ENCODE measurements at regions of chr16 and their contacts with region 1.

Region 1: DNA sequence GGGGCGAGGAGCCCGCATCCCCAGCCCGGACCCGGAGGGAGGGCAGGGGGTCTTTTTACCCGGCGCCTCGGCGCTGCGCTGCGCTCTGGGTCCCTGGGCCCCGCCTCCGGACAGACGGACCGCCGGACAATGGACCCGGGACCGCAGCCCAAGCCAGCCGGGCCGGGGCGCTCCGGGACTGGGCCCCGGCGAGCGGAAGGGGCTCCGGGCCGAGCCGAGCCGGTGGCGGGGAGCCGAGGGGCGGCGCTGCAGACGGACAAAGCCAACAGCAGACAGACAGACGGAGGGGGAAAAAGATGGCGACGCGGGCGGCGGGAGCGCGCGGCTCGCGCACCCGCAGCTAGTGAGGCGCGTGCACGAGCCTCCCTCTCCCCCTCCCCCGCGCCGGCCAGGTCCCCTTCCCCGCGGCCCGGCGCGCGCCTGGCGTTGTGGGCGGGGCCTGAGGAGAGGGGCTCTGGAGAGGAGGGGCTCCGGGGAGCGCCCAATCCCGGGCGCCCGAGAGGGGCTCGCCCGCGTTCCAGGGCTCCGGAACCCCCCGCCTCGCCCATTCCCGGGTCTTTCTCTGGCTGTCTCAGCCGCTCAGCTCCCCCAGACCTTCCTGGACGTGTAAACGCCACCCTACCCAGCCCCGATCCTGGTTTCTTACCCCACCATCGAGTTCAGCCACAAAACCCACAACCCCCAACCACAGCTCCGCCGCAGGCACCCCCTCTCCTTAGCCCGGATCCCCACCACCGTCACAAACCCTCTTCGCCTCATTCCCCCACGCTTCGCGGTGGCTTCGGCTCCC is at the start of gene ZNF821:
- DNase-seq: peak; percentile 100
- H3K4me3 ChIP-seq: peak within 1 kb of the TSS; percentile 88 to 97
- H3K27ac ChIP-seq: peak within 1 kb of the TSS; percentile 70 to 84
- H3K4me1 ChIP-seq: peaks cover 0 to 8% of the 10 kb centered on the region in 2 experiments; a peak in 2 of 4 replicates
- H3K27me3 ChIP-seq: no peaks in the 10 kb centered on the region
- CTCF ChIP-seq: peak; percentile 50
- EP300 ChIP-seq: no peak
- RAD21 ChIP-seq: no peak
- polyA plus RNA-seq, gene ZNF821: 7.7 and 8.8 TPM in 2 replicates

Region 2: DNA sequence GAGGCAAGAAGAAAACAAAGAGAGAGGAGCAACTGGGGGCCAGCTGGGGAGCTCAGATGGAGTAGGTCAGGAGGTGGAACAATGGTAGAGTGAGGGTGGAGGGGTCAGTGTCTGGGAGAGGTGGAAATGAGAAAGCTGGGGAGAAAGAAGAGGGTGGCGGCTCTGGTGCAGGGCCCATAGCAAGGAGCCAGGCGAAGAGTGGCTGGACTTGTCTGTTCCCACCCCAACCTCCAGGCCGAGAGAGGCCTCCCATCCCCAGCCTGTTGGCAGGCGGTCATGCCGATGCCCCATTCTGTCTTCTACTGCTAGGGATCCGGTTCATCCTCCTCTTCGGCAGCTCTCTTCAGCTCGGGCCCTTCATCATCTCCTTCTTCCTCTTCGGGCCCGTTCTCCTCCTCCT is 106.7 kb before region 1 on chr16:
- CTCF ChIA-PET with region 1: no interaction called
- POLR2A ChIA-PET with region 1: no interaction called
- DNase-seq: no peak
- H3K4me3 ChIP-seq: no peak overlapping the region
- H3K27ac ChIP-seq: no peak overlapping the region
- H3K4me1 ChIP-seq: peaks cover 0 to 9% of the 10 kb centered on the region in 2 experiments; a peak in 2 of 4 replicates
- H3K27me3 ChIP-seq: no peaks in the 10 kb centered on the region
- CTCF ChIP-seq: no peak
- EP300 ChIP-seq: no peak
- RAD21 ChIP-seq: no peak

Region 3: GRCh38 chr16:71794943-71795342 is 89.1 kb before region 1 on chr16:
- CTCF ChIA-PET with region 1: no interaction called
- POLR2A ChIA-PET with region 1: no interaction called
- DNase-seq: no peak
- H3K4me3 ChIP-seq: no peak overlapping the region
- H3K27ac ChIP-seq: peak overlapping the region in 1 of 2 experiments; percentile 23; a peak in 1 of 4 replicates
- H3K4me1 ChIP-seq: no peaks in the 10 kb centered on the region; a peak in 1 of 4 replicates
- H3K27me3 ChIP-seq: no peaks in the 10 kb centered on the region
- CTCF ChIP-seq: no peak
- EP300 ChIP-seq: no peak
- RAD21 ChIP-seq: no peak

Region 4: GRCh38 chr16:71853413-71853812 is 30.6 kb before region 1 on chr16:
- CTCF ChIA-PET with region 1: interaction called, 33 read pairs
- POLR2A ChIA-PET with region 1: no interaction called
- DNase-seq: no peak
- H3K4me3 ChIP-seq: no peak overlapping the region
- H3K27ac ChIP-seq: no peak overlapping the region
- H3K4me1 ChIP-seq: no peaks in the 10 kb centered on the region
- H3K27me3 ChIP-seq: no peaks in the 10 kb centered on the region
- CTCF ChIP-seq: no peak
- EP300 ChIP-seq: no peak
- RAD21 ChIP-seq: no peak

Region 5: DNA sequence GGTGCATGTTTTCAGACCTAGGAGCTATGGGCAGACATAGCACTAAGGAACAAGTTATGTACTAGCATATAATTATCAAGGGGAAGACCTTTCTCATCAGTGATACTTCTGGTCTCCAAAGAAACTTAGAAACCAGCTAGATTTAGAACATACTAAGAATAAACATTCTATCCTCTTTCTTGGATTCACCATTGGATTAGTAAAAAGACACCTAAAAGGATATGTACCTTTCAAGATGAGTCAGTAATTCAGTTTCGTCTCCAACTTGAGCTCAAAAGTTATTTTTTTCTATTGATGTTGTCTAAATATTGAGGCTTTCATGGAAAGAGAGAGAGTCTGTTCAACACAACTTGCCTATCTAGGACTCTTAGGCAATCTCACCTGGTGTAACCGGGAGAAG is 13.2 kb before region 1 on chr16:
- CTCF ChIA-PET with region 1: interaction called, 57 read pairs
- POLR2A ChIA-PET with region 1: interaction called, 4 read pairs
- DNase-seq: no peak
- H3K4me3 ChIP-seq: no peak overlapping the region
- H3K27ac ChIP-seq: no peak overlapping the region
- H3K4me1 ChIP-seq: no peaks in the 10 kb centered on the region; a peak in 1 of 4 replicates
- H3K27me3 ChIP-seq: no peaks in the 10 kb centered on the region
- CTCF ChIP-seq: no peak
- EP300 ChIP-seq: no peak
- RAD21 ChIP-seq: no peak

Region 6: DNA sequence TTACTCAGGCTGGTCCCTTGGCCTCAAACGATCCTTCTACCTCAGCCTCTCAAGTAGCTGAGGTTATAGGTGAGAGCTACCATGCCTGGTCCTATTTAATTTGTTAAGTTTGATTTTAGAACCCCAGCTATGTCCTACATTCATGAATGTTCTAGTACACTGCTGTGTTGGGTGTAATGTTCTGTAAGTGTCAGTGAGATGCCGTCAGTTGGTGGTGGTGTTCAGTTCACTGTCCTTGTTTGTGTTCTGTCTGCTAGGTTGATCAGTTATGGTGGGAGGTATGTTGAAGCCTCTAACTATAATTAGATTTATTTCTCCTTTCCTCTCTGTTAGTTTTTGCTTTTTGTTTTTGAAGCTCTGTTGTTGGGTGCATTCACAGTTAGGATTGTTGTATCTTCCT is 19.6 kb after region 1 on chr16:
- CTCF ChIA-PET with region 1: interaction called, 10 read pairs
- POLR2A ChIA-PET with region 1: interaction called, 5 read pairs
- DNase-seq: no peak
- H3K4me3 ChIP-seq: no peak overlapping the region
- H3K27ac ChIP-seq: no peak overlapping the region
- H3K4me1 ChIP-seq: no peaks in the 10 kb centered on the region
- H3K27me3 ChIP-seq: no peaks in the 10 kb centered on the region
- CTCF ChIP-seq: no peak
- EP300 ChIP-seq: no peak
- RAD21 ChIP-seq: no peak

Region 7: GRCh38 chr16:71961066-71962039 is 77.3 kb after region 1 on chr16:
- CTCF ChIA-PET with region 1: interaction called, 37 read pairs
- POLR2A ChIA-PET with region 1: interaction called, 5 read pairs
- DNase-seq: peak; percentile 71
- H3K4me3 ChIP-seq: no peak overlapping the region
- H3K27ac ChIP-seq: no peak overlapping the region
- H3K4me1 ChIP-seq: no peaks in the 10 kb centered on the region; a peak in 1 of 4 replicates
- H3K27me3 ChIP-seq: no peaks in the 10 kb centered on the region
- CTCF ChIP-seq: peak; percentile 92
- EP300 ChIP-seq: no peak
- RAD21 ChIP-seq: peak; percentile 87

Region 8: GRCh38 chr16:71985262-71985974 is 101.4 kb after region 1 on chr16:
- CTCF ChIA-PET with region 1: no interaction called
- POLR2A ChIA-PET with region 1: no interaction called
- DNase-seq: no peak
- H3K4me3 ChIP-seq: no peak overlapping the region
- H3K27ac ChIP-seq: no peak overlapping the region
- H3K4me1 ChIP-seq: no peaks in the 10 kb centered on the region
- H3K27me3 ChIP-seq: peaks cover 15% of the 10 kb centered on the region
- CTCF ChIP-seq: no peak
- EP300 ChIP-seq: no peak
- RAD21 ChIP-seq: no peak

Measured in SK-N-SH (cell line).